ENCODE measurements at regions of chr11 and their contacts with region 1.

Region 1: DNA sequence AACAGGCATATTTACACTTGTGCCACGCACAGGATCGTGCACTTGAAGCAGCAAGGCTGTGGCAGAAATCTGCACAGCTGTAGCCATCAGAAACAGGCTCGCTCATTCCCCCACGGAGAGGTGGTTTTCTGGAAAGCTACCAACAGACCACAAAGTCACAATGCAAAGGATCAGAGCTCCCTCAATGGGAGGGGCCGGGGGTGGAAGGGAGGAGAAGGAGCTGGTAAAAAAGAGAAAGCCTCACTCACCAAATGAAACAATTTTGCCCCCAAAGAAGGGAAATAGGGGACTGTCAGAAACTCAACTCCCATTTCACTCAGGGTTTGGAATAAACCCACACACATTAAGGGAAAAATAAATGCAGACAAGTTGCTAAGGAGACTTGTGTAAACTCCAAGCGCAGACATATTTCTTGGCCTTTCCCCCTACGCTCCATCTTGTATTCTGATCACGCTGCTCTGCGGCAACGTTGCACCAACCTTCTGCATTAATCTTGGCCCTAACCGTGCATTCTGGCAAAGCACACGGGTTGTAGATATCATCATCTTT is 43.2 kb upstream of the BLID start:
- DNase-seq: no peak
- ATAC-seq: peak; percentile 41
- H3K4me3 ChIP-seq: peak overlapping the region in 1 of 2 experiments; percentile 54
- H3K27ac ChIP-seq: peak overlapping the region; percentile 95
- H3K4me1 ChIP-seq: peaks cover 89 to 100% of the 10 kb centered on the region in 2 experiments
- H3K27me3 ChIP-seq: no peaks in the 10 kb centered on the region
- CTCF ChIP-seq: no peak
- POLR2A ChIP-seq: no peak
- RAD21 ChIP-seq: no peak; the same call in 1 of the 2 replicates

Region 2: GRCh38 chr11:122085264-122085663 is 74.0 kb before region 1 on chr11:
- CTCF ChIA-PET with region 1: no interaction called
- POLR2A ChIA-PET with region 1: no interaction called
- RAD21 ChIA-PET with region 1: no interaction called
- intact Hi-C with region 1: no loop called
- DNase-seq: no peak
- ATAC-seq: peak; percentile 41; the same call in 1 of the 2 replicates
- H3K4me3 ChIP-seq: no peak overlapping the region
- H3K27ac ChIP-seq: peak overlapping the region; percentile 26; the same call in 1 of the 2 replicates
- H3K4me1 ChIP-seq: peaks cover 12 to 39% of the 10 kb centered on the region in 2 experiments
- H3K27me3 ChIP-seq: no peaks in the 10 kb centered on the region
- CTCF ChIP-seq: no peak
- POLR2A ChIP-seq: no peak
- RAD21 ChIP-seq: no peak

Region 3: DNA sequence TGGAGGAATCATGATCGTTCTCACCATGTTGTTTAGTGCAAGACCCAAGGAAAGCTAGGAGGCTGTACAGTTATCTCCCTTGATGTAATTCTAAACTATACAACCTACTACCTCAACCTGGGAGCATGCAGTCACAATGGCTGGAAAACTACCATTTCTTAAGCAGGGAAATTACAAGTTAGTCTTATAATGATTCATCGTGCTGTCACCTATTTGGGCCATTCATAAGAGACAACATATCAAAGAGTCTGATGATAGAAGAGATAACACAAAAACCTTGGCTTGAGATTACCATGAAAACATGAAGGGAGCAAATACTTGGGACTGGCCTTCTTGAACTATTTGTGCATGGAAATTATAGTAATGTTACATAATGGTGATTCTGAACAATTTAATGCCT is 12.8 kb before region 1 on chr11:
- CTCF ChIA-PET with region 1: interaction called, 3 read pairs
- POLR2A ChIA-PET with region 1: interaction called, 24 read pairs
- RAD21 ChIA-PET with region 1: no interaction called
- intact Hi-C with region 1: no loop called
- DNase-seq: peak; percentile 81
- ATAC-seq: peak; percentile 48
- H3K4me3 ChIP-seq: peak overlapping the region in 1 of 2 experiments; percentile 7; a peak in 2 of 4 replicates
- H3K27ac ChIP-seq: peak overlapping the region; percentile 95
- H3K4me1 ChIP-seq: peaks cover 86 to 100% of the 10 kb centered on the region in 2 experiments
- H3K27me3 ChIP-seq: no peaks in the 10 kb centered on the region
- CTCF ChIP-seq: no peak
- POLR2A ChIP-seq: no peak
- RAD21 ChIP-seq: peak; percentile 25; the same call in 1 of the 2 replicates

Region 4: DNA sequence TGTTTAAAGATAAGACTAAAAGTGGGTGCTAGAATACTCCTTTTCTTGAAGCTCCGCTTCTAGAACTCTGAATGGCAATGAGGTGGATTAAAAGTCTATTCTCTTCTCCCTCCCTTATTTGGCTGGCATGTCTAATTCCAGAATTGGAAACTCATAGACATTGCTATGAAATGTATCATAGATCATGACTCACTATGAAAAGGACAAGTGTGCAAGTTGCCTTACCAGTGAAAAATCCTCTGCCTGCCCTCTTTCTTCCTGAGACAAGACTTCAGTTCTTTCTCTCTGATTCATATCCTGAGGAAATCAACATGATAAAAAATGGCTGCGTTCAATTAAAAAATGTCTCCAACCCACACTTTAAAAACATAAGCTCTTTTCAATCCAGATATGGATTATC is 30.0 kb after region 1 on chr11:
- CTCF ChIA-PET with region 1: no interaction called
- POLR2A ChIA-PET with region 1: interaction called, 18 read pairs
- RAD21 ChIA-PET with region 1: no interaction called
- intact Hi-C with region 1: no loop called
- DNase-seq: peak; percentile 90
- ATAC-seq: peak; percentile 62
- H3K4me3 ChIP-seq: no peak overlapping the region
- H3K27ac ChIP-seq: peak overlapping the region; percentile 97
- H3K4me1 ChIP-seq: peaks cover 83 to 100% of the 10 kb centered on the region in 2 experiments
- H3K27me3 ChIP-seq: no peaks in the 10 kb centered on the region
- CTCF ChIP-seq: 0 out of 6 replicates have a peak, but pooled peaks of 1 of the 3 experiments have one; percentile 3
- POLR2A ChIP-seq: no peak
- RAD21 ChIP-seq: peak; percentile 41

Region 5: DNA sequence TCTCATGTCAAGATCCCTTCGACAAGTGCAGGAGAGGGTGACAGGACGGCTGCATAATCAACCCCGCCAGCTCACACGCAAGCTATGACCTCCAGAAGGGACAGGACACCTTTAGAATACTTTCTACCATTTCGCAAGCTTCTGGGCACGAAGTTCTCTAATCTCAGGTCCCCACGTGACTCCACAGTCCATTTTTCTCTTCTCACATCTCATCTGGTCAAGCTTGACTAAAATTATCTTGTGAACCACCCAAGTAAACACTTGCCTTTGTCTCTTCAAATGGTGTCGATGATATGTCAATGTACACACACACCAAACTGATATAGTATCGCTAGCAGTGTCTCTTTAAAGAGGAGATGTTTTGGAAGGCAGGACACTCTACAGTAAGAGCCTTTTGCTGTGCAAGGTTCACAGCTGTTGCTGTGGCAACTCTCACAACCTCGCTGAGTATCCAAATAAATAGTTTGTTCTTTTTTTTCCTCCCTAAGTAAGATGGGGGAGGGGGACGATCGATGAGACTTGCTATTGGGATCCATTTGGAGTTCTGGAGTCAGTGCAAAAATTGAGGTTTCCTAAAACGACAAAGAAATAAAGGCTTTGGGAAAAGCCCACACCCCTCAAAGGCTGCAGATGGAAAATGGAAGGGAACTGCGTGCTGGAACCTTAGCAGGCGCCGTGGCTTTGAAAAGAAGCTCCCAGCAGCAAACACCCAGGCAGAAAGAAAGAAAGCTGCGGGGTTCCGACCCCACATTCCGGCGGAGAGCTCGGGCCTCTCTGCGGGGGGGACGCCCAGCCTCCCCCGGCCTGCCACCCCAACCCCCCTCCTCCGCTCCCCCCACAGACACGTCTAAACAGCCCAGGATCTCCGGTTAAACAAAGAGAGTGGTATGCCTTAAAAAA is 280.9 kb after region 1 on chr11:
- CTCF ChIA-PET with region 1: no interaction called
- POLR2A ChIA-PET with region 1: no interaction called
- RAD21 ChIA-PET with region 1: no interaction called
- intact Hi-C with region 1: no loop called
- DNase-seq: no peak
- ATAC-seq: no peak
- H3K4me3 ChIP-seq: no peak overlapping the region
- H3K27ac ChIP-seq: no peak overlapping the region
- H3K4me1 ChIP-seq: no peaks in the 10 kb centered on the region
- H3K27me3 ChIP-seq: no peaks in the 10 kb centered on the region
- CTCF ChIP-seq: no peak
- POLR2A ChIP-seq: no peak
- RAD21 ChIP-seq: no peak

Measured in HCT116 (cell line).